ENCODE measurements at regions of chr4 and their contacts with region 1.

Region 1: DNA sequence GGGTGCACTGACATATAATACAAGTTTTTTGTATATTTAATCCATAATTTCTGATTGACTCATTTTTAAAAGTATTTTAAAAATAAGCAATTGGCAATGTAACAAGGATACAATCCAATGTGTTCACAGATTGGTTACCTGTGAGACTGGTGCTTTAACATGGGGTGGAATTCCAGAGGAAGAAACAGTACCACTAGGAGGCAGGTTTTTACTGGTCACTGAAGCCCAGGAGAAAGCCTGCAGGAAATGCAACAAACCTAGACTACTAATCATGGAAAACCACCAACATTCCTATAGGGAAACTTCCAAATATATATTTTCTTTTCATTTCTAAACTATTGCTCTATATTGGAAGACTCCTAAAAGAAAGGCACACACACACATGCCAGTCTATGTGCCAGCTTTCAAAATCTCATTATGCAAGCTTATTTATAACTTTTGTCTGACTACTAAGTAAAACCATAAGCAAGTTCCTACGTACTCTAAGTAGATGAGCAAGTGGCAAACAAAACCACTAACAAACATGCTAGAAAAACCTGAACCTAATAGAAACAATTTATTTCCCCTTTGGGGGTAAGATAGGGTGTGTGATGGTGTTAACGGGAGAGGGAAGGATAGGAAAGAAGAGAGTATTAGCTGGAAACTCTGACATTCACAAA is 19.2 kb downstream of the G3BP2 start:
- DNase-seq: no peak
- H3K4me3 ChIP-seq: no peak overlapping the region
- H3K27ac ChIP-seq: no peak overlapping the region
- H3K4me1 ChIP-seq: no peaks in the 10 kb centered on the region
- H3K27me3 ChIP-seq: no peaks in the 10 kb centered on the region
- CTCF ChIP-seq: peak in 1 of 4 experiments; percentile 31
- EP300 ChIP-seq: no peak
- POLR2A ChIP-seq: no peak

Region 2: GRCh38 chr4:75800972-75801371 is 147.0 kb after region 1 on chr4:
- intact Hi-C with region 1: loop called (anchors 10 kb)
- DNase-seq: no peak
- H3K4me3 ChIP-seq: no peak overlapping the region
- H3K27ac ChIP-seq: no peak overlapping the region
- H3K4me1 ChIP-seq: no peaks in the 10 kb centered on the region
- H3K27me3 ChIP-seq: no peaks in the 10 kb centered on the region
- CTCF ChIP-seq: no peak
- EP300 ChIP-seq: no peak
- POLR2A ChIP-seq: no peak